ENCODE measurements at regions of chr6 and their contacts with region 1.

Region 1: DNA sequence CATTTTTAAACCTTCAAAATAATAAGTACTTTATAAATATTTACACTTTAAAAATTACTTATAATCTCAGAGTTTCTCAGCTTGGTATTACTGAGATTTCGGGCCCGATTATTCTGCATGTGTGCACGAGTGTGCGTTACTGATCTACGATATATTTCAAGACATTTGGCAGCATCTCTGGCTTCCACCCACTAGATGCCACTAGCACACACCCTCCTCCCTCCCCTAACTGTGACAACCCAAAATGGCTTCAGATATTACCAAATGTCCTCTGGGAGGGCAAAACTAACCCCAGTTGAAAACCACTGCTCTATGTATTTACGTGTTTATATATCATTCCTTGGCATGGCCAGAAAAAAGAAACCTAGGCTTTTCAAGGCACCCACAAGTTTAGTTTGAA is 95.9 kb downstream of the FYN start:
- DNase-seq: peak in 3 of 5 donors; percentile 15 to 67 (median 48)
- H3K4me3 ChIP-seq: no peak overlapping the region
- H3K4me3 Mint-ChIP-seq: peak overlapping the region; percentile 10 to 81 (median 63)
- H3K27ac ChIP-seq: no peak overlapping the region
- H3K27ac Mint-ChIP-seq: peak overlapping the region; percentile 75 to 99 (median 86)
- H3K4me1 ChIP-seq: peaks cover 87% of the 10 kb centered on the region
- H3K4me1 Mint-ChIP-seq: peaks cover 87 to 96% (median 96%) of the 10 kb centered on the region in 3 donors
- H3K27me3 ChIP-seq: no peaks in the 10 kb centered on the region
- H3K27me3 Mint-ChIP-seq: no peaks in the 10 kb centered on the region

Region 2: GRCh38 chr6:111750753-111751684 is 26.3 kb before region 1 on chr6:
- CTCF ChIA-PET with region 1: interaction called, 19 read pairs
- POLR2A ChIA-PET with region 1: interaction called, 11 read pairs
- DNase-seq: peak; percentile 44 to 82 (median 81)
- H3K4me3 ChIP-seq: peak overlapping the region; percentile 31
- H3K4me3 Mint-ChIP-seq: peak overlapping the region; percentile 57 to 81 (median 76)
- H3K27ac ChIP-seq: peak overlapping the region; percentile 68
- H3K27ac Mint-ChIP-seq: peak overlapping the region; percentile 97 to 100 (median 100)
- H3K4me1 ChIP-seq: peaks cover 98% of the 10 kb centered on the region
- H3K4me1 Mint-ChIP-seq: peaks cover 94 to 100% (median 99%) of the 10 kb centered on the region in 3 donors
- H3K27me3 ChIP-seq: no peaks in the 10 kb centered on the region
- H3K27me3 Mint-ChIP-seq: no peaks in the 10 kb centered on the region

Region 3: DNA sequence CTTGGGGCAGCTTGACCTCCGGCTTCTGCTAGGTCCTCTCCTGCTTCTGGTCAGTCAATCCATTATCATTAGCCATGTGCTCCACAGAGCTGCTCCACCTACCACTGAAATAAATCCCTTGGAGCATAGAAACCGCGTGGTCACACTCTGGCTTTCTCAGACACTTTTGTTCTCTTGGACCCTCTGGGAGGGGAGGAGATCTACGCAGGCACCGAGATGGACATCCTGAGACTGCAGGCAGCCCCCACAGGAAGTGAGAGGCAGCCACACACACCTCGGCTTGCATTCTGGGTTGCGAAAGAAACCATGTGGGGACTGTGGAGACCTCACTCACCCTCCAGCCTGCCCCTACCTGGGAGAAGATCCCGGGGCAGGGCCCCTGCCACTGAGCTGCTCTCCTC is 16.4 kb after region 1 on chr6:
- CTCF ChIA-PET with region 1: interaction called, 16 read pairs
- POLR2A ChIA-PET with region 1: interaction called, 6 read pairs
- DNase-seq: peak; percentile 37 to 82 (median 53)
- H3K4me3 ChIP-seq: peak overlapping the region; percentile 64
- H3K4me3 Mint-ChIP-seq: peak overlapping the region; percentile 89 to 100 (median 94)
- H3K27ac ChIP-seq: peak overlapping the region; percentile 70
- H3K27ac Mint-ChIP-seq: peak overlapping the region in 7 of 8 donors; percentile 96 to 99 (median 98)
- H3K4me1 ChIP-seq: peaks cover 76% of the 10 kb centered on the region
- H3K4me1 Mint-ChIP-seq: peaks cover 6 to 69% (median 62%) of the 10 kb centered on the region in 3 donors
- H3K27me3 ChIP-seq: no peaks in the 10 kb centered on the region
- H3K27me3 Mint-ChIP-seq: no peaks in the 10 kb centered on the region